Activated CD4-positive, alpha-beta T cell treated with anti-CD3 and anti-CD28 coated beads for 36 hours (primary cell): ENCODE measurements at regions of chr6 and their contacts with region 1.

Region 1: GRCh38 chr6:291697-292505 is at the start of gene DUSP22:
- DNase-seq: peak; percentile 93
- ATAC-seq: peak; percentile 70
- H3K4me3 Mint-ChIP-seq: peak within 1 kb of the TSS; percentile 81
- H3K27ac Mint-ChIP-seq: peak within 1 kb of the TSS; percentile 93
- H3K4me1 Mint-ChIP-seq: peaks cover 58% of the 10 kb centered on the region
- H3K27me3 Mint-ChIP-seq: no peaks in the 10 kb centered on the region
- total RNA-seq, gene DUSP22: 33.2 to 33.7 TPM

Region 2: DNA sequence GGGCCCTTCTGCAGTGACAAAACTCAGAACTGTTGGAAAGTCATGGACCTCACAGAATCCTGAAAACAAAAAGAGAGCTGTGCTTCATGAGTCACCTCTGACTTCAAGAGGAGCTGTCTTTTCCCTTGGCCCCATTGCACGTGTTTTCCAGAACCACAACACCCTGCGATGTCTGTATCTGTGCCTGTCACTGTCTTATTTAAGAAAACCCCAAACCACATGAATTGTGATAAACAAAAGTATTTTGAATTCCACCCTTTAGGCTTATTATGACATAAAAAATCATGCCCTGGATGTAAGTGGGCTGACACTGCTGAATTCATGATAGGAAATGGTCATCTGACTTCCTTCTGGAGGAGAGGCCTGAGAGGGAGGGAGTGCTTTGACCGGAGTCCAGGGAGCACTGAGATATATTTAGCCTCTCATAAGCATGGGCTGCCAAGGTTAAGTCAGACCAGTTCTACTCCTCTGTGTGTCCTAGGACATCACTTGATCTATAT is 96.0 kb before region 1 on chr6:
- CTCF ChIA-PET with region 1: no interaction called
- POLR2A ChIA-PET with region 1: no interaction called
- intact Hi-C with region 1: loop called in 1 of 2 experiments (anchors 1 kb)
- DNase-seq: peak; percentile 84
- ATAC-seq: peak; percentile 45
- H3K4me3 Mint-ChIP-seq: no peak overlapping the region
- H3K27ac Mint-ChIP-seq: no peak overlapping the region
- H3K4me1 Mint-ChIP-seq: peaks cover 54% of the 10 kb centered on the region
- H3K27me3 Mint-ChIP-seq: no peaks in the 10 kb centered on the region

Region 3: DNA sequence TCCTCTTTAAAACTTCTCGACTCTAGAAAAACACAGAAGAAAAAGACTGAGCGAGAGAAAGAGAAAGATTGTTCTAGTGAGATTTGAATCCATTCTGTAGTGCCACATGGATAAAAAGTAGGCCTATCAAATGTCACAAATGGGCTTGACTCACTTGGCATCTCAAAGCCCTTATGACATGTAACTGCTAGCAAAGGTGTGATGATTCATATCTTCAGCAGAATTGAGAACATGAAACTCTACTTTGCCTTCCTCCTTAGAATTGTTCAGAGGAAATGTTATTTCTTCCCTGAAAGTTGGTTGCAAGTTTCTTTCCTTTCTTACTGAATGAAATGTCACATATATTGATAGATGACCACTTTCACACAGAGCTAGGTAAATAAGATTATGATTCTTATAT is 40.0 kb before region 1 on chr6:
- CTCF ChIA-PET with region 1: interaction called, 3 read pairs
- POLR2A ChIA-PET with region 1: no interaction called
- intact Hi-C with region 1: loop called (anchors 1 to 5 kb)
- DNase-seq: no peak
- ATAC-seq: peak; percentile 97
- H3K4me3 Mint-ChIP-seq: no peak overlapping the region
- H3K27ac Mint-ChIP-seq: peak overlapping the region; percentile 92
- H3K4me1 Mint-ChIP-seq: peaks cover 42% of the 10 kb centered on the region
- H3K27me3 Mint-ChIP-seq: no peaks in the 10 kb centered on the region

Region 4: DNA sequence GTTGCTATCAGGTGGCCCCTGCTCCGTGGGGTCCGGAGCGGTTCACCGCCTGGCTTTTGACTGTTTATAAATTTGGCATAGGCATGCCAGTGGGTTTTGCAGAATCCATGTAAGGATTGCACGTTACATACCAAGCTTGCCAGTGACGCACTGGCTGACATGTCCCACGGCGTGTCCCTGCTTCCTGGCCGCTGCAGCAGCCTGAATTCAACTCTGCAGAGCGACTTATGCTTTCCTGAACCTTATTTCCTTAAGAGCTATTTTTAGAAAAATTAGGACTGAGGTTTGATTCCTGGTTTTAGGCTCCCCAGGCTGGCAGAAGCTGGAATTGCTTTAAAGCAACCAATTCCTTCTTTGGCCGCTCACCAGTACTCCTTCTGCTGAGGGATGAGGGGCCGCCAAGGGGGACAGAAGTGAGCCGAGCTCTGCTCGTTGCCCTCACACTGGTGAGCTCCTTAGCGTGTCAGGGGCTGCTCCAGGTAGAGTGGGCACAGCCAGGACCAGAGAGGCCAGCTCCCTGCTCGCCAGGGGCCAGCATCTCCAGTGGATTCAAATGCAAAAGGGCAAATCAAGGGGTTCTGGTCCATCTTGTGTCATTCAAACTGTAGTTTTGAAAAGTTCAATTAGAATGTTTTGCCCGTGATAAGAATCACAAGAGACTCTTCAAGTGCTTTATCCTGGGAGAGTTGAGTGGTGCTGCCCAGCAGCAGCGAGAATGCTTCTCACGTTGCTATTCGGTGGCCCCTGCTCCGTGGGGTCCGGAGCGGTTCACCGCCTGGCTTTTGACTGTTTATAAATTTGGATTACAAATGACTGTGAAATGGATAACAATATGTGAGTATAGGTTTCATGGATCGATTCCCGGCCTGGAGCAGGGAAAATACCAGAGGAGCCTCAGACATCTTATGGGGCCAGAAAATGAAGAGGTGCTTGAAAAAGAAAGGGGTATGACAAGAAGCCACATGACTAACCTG is 82.1 kb after region 1 on chr6:
- CTCF ChIA-PET with region 1: no interaction called
- POLR2A ChIA-PET with region 1: no interaction called
- intact Hi-C with region 1: no loop called
- DNase-seq: no peak
- ATAC-seq: no peak
- H3K4me3 Mint-ChIP-seq: no peak overlapping the region
- H3K27ac Mint-ChIP-seq: no peak overlapping the region
- H3K4me1 Mint-ChIP-seq: peaks cover 7% of the 10 kb centered on the region
- H3K27me3 Mint-ChIP-seq: peaks cover 35% of the 10 kb centered on the region

Region 5: GRCh38 chr6:446418-447366 is 154.8 kb after region 1 on chr6:
- CTCF ChIA-PET with region 1: interaction called, 5 read pairs
- POLR2A ChIA-PET with region 1: interaction called, 8 read pairs
- intact Hi-C with region 1: loop called in 1 of 2 experiments (anchors 1 kb)
- DNase-seq: peak; percentile 96
- ATAC-seq: peak; percentile 77
- H3K4me3 Mint-ChIP-seq: peak overlapping the region; percentile 65
- H3K27ac Mint-ChIP-seq: peak overlapping the region; percentile 90
- H3K4me1 Mint-ChIP-seq: peaks cover 52% of the 10 kb centered on the region
- H3K27me3 Mint-ChIP-seq: no peaks in the 10 kb centered on the region

Region 6: GRCh38 chr6:498795-499231 is 206.9 kb after region 1 on chr6:
- CTCF ChIA-PET with region 1: no interaction called
- POLR2A ChIA-PET with region 1: no interaction called
- intact Hi-C with region 1: loop called (anchors 2 to 5 kb)
- DNase-seq: peak; percentile 81
- ATAC-seq: peak; percentile 64
- H3K4me3 Mint-ChIP-seq: peak overlapping the region; percentile 63
- H3K27ac Mint-ChIP-seq: peak overlapping the region; percentile 93
- H3K4me1 Mint-ChIP-seq: peaks cover 87% of the 10 kb centered on the region
- H3K27me3 Mint-ChIP-seq: no peaks in the 10 kb centered on the region